AG04450 (cell line): ENCODE measurements at regions of chr17 and their contacts with region 1.

Region 1: GRCh38 chr17:47840740-47841603 is at the start of gene SCRN2:
- DNase-seq: peak; percentile 34
- H3K4me3 ChIP-seq: peak within 1 kb of the TSS; percentile 82
- H3K27ac ChIP-seq: no peak within 1 kb of the TSS
- H3K27me3 ChIP-seq: peaks cover 14% of the 10 kb centered on the region
- CTCF ChIP-seq: peak; percentile 98
- polyA plus RNA-seq, gene SCRN2: 13.3 and 17.2 TPM in 2 replicates

Region 2: GRCh38 chr17:47872021-47872650 is 31.2 kb after region 1 on chr17:
- CTCF ChIA-PET with region 1: interaction called, 11 read pairs
- POLR2A ChIA-PET with region 1: no interaction called
- DNase-seq: no peak
- H3K4me3 ChIP-seq: no peak overlapping the region
- H3K27ac ChIP-seq: no peak overlapping the region
- H3K27me3 ChIP-seq: peaks cover 29% of the 10 kb centered on the region
- CTCF ChIP-seq: no peak

Region 3: GRCh38 chr17:47895856-47896671 is 55.1 kb after region 1 on chr17 and contains the start of gene SP2:
- CTCF ChIA-PET with region 1: interaction called, 502 read pairs
- POLR2A ChIA-PET with region 1: interaction called, 11 read pairs
- DNase-seq: peak; percentile 100
- H3K4me3 ChIP-seq: peak within 1 kb of the TSS; percentile 95
- H3K27ac ChIP-seq: peak within 1 kb of the TSS; percentile 87
- H3K27me3 ChIP-seq: no peaks in the 10 kb centered on the region
- CTCF ChIP-seq: no peak
- polyA plus RNA-seq, gene SP2: 2.7 and 3.9 TPM in 2 replicates

Region 4: GRCh38 chr17:47929218-47930000 is 88.4 kb after region 1 on chr17:
- CTCF ChIA-PET with region 1: no interaction called
- POLR2A ChIA-PET with region 1: no interaction called
- DNase-seq: no peak
- H3K4me3 ChIP-seq: no peak overlapping the region
- H3K27ac ChIP-seq: no peak overlapping the region
- H3K27me3 ChIP-seq: no peaks in the 10 kb centered on the region
- CTCF ChIP-seq: no peak

Region 5: GRCh38 chr17:48011405-48012150 is 170.6 kb after region 1 on chr17:
- CTCF ChIA-PET with region 1: interaction called, 13 read pairs
- POLR2A ChIA-PET with region 1: no interaction called
- DNase-seq: no peak
- H3K4me3 ChIP-seq: peak overlapping the region; percentile 54
- H3K27ac ChIP-seq: no peak overlapping the region
- H3K27me3 ChIP-seq: peaks cover 9% of the 10 kb centered on the region
- CTCF ChIP-seq: peak; percentile 59